Activated naive CD4-positive, alpha-beta T cell treated with anti-CD3 and anti-CD28 coated beads for 36 hours (primary cell): ENCODE measurements at regions of chr17 and their contacts with region 1.

Region 1: DNA sequence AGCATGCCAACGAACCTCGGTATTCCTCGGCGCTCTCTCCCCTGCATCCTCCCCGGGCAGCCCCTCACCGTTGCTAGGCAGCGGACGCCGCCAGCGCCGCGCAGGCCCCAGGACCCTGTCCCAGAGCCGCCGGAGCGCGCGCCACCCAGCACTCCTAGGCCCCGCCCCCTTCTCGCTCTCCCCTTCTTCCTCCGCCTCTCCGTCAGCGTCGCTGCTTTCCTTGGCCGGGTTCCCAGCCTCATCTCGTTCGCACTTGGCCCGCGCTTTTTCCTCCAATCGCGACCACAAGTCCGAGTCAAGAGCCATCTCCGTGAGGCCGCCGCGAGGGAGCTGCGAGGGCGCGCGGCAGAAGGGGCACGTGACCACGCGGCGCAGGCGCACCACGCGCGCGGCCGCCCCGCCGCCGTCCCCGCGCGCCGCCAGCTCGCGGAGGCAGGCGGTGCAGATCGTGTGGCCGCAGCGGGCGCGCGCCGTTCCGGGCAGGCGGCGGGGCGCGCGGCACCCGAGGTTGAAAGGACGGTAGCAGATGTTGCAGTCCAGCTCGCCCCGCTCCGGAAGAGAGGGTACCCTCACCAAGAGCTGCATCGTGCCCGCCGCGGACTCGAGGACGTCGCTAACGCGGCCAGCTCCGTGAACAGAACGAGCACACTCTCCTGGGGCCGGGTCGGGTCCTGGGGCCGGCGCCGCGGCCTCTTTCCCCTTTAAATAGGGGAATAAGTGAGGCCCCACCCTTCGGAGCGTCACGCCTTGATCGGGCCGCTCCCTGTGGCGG is at the start of gene RNF227:
- DNase-seq: peak; percentile 91
- H3K4me3 Mint-ChIP-seq: peak within 1 kb of the TSS; percentile 93
- H3K27ac Mint-ChIP-seq: peak within 1 kb of the TSS; percentile 92
- H3K4me1 Mint-ChIP-seq: peaks cover 29% of the 10 kb centered on the region
- H3K27me3 Mint-ChIP-seq: no peaks in the 10 kb centered on the region
- total RNA-seq, gene RNF227: 3.1 to 3.8 TPM

Region 2: GRCh38 chr17:7744416-7744815 is 171.4 kb before region 1 on chr17:
- CTCF ChIA-PET with region 1: interaction called, 6 read pairs
- intact Hi-C with region 1: loop called (anchors 1 kb)
- DNase-seq: no peak
- H3K4me3 Mint-ChIP-seq: no peak overlapping the region
- H3K27ac Mint-ChIP-seq: no peak overlapping the region
- H3K4me1 Mint-ChIP-seq: no peaks in the 10 kb centered on the region
- H3K27me3 Mint-ChIP-seq: peaks cover 8% of the 10 kb centered on the region

Region 3: GRCh38 chr17:7809086-7809790 is 106.6 kb before region 1 on chr17:
- CTCF ChIA-PET with region 1: no interaction called
- intact Hi-C with region 1: no loop called
- DNase-seq: no peak
- H3K4me3 Mint-ChIP-seq: no peak overlapping the region
- H3K27ac Mint-ChIP-seq: no peak overlapping the region
- H3K4me1 Mint-ChIP-seq: peaks cover 5% of the 10 kb centered on the region
- H3K27me3 Mint-ChIP-seq: peaks cover 3% of the 10 kb centered on the region

Region 4: GRCh38 chr17:7862692-7863437 is 52.9 kb before region 1 on chr17:
- CTCF ChIA-PET with region 1: interaction called, 3 read pairs
- intact Hi-C with region 1: loop called (anchors 1 kb)
- DNase-seq: peak; percentile 56
- H3K4me3 Mint-ChIP-seq: no peak overlapping the region
- H3K27ac Mint-ChIP-seq: no peak overlapping the region
- H3K4me1 Mint-ChIP-seq: peaks cover 11% of the 10 kb centered on the region
- H3K27me3 Mint-ChIP-seq: no peaks in the 10 kb centered on the region

Region 5: DNA sequence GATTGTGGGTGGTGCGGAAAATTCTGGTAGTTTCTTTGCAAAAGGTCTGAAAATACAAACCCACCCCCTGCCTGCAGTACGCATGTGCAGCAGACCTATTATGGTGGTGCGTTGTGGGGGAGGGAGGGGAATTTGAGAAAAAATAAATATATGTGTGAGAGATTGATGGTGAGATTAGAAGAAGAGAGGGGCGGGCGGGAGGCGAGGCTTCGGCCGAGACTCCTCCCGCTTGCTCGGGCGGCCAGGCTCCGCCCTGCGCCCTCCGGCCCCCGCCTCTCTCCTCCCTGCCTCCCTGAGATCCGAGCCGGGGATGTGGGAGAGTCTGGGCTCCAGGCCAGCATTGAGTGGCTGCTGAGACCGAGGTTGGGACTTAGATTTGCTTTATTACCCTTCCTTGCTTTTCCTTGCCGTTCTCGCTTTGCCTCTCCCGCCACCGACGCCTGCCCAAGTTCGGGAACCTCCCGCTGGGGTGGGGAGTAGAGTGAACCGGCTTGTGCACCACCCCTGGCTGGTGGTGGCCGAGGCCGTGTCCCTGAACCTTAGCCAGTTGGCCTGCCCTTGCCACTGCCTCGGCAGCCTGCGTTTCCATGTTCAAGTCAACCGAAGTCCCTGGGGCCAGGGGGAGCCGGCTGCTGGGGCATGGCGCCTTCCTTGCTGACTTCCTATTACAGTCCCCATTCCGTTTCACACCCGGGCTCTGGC is 28.2 kb before region 1 on chr17:
- CTCF ChIA-PET with region 1: no interaction called
- intact Hi-C with region 1: loop called (anchors 1 kb)
- DNase-seq: peak; percentile 96
- H3K4me3 Mint-ChIP-seq: no peak overlapping the region
- H3K27ac Mint-ChIP-seq: no peak overlapping the region
- H3K4me1 Mint-ChIP-seq: peaks cover 5% of the 10 kb centered on the region
- H3K27me3 Mint-ChIP-seq: no peaks in the 10 kb centered on the region

Region 6: GRCh38 chr17:7931709-7932482 is 16.1 kb after region 1 on chr17 and contains the starts of genes CNTROB and TRAPPC1:
- CTCF ChIA-PET with region 1: interaction called, 5 read pairs
- intact Hi-C with region 1: loop called (anchors 1 kb)
- DNase-seq: peak; percentile 100
- H3K4me3 Mint-ChIP-seq: peak within 1 kb of the TSS; percentile 91
- H3K27ac Mint-ChIP-seq: peak within 1 kb of the TSS; percentile 87
- H3K4me1 Mint-ChIP-seq: peaks cover 38% of the 10 kb centered on the region
- H3K27me3 Mint-ChIP-seq: no peaks in the 10 kb centered on the region
- total RNA-seq, gene CNTROB: 49.3 to 56.3 TPM
- total RNA-seq, gene TRAPPC1: 162 to 172 TPM

Region 7: DNA sequence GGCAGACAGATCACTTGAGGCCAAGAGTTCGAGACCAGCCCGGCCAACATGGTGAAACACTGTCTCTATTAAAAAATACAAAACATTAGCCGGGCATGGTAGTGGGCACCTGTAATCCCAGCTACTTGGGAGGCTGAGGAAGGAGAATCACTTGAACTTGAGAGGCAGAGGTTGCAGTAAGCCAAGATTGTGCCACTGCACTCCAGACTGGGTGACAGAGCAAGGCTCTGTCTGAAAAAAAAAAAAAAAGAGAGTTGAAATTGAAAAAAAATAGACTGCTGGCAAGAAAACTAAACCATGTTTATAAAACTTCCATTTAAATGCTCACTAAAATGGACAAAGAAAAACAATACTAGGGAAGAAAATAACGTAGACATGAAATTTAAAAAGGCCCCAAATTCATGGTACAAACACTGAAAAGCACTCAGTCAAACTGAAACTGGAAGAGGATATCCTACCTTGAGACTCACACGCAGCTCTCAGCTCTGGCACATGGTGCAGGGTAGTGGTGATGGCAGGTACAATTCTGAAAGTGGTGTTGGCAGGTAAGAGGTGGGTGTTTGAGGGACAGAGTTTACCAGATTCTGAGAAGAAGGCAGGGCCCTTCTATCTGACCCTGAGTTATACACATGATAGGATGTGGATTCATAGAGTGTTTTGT is 35.5 kb after region 1 on chr17:
- CTCF ChIA-PET with region 1: interaction called, 3 read pairs
- intact Hi-C with region 1: loop called (anchors 1 kb)
- DNase-seq: peak; percentile 68
- H3K4me3 Mint-ChIP-seq: no peak overlapping the region
- H3K27ac Mint-ChIP-seq: peak overlapping the region; percentile 20
- H3K4me1 Mint-ChIP-seq: peaks cover 16% of the 10 kb centered on the region
- H3K27me3 Mint-ChIP-seq: no peaks in the 10 kb centered on the region

Region 8: GRCh38 chr17:8041249-8041928 is 125.6 kb after region 1 on chr17:
- CTCF ChIA-PET with region 1: interaction called, 4 read pairs
- intact Hi-C with region 1: loop called (anchors 1 kb)
- DNase-seq: peak; percentile 62
- H3K4me3 Mint-ChIP-seq: no peak overlapping the region
- H3K27ac Mint-ChIP-seq: no peak overlapping the region
- H3K4me1 Mint-ChIP-seq: peaks cover 3% of the 10 kb centered on the region
- H3K27me3 Mint-ChIP-seq: peaks cover 22% of the 10 kb centered on the region